ENCODE measurements at regions of chr15 and their contacts with region 1.

Region 1: GRCh38 chr15:75517233-75517632 is 61.9 kb downstream of the PTPN9 start:
- DNase-seq: no peak
- ATAC-seq: no peak
- H3K4me3 ChIP-seq: no peak overlapping the region
- H3K27ac ChIP-seq: no peak overlapping the region
- H3K4me1 ChIP-seq: no peaks in the 10 kb centered on the region
- H3K27me3 ChIP-seq: no peaks in the 10 kb centered on the region
- CTCF ChIP-seq: no peak

Region 2: GRCh38 chr15:75606711-75607699 is 89.8 kb after region 1 on chr15:
- intact Hi-C with region 1: no loop called
- DNase-seq: no peak
- ATAC-seq: no peak
- H3K4me3 ChIP-seq: no peak overlapping the region
- H3K27ac ChIP-seq: no peak overlapping the region
- H3K4me1 ChIP-seq: no peaks in the 10 kb centered on the region
- H3K27me3 ChIP-seq: no peaks in the 10 kb centered on the region
- CTCF ChIP-seq: no peak

Region 3: GRCh38 chr15:75672646-75673425 is 155.6 kb after region 1 on chr15:
- intact Hi-C with region 1: loop called in 1 of 2 experiments (anchors 10 kb)
- DNase-seq: no peak
- ATAC-seq: peak; percentile 16 to 53 (median 46)
- H3K4me3 ChIP-seq: no peak overlapping the region
- H3K27ac ChIP-seq: peak overlapping the region; percentile 56
- H3K4me1 ChIP-seq: peaks cover 35% of the 10 kb centered on the region
- H3K27me3 ChIP-seq: no peaks in the 10 kb centered on the region
- CTCF ChIP-seq: no peak

Measured in psoas muscle (tissue), 8 donors.